ENCODE measurements at regions of chr19 and their contacts with region 1.

Region 1: DNA sequence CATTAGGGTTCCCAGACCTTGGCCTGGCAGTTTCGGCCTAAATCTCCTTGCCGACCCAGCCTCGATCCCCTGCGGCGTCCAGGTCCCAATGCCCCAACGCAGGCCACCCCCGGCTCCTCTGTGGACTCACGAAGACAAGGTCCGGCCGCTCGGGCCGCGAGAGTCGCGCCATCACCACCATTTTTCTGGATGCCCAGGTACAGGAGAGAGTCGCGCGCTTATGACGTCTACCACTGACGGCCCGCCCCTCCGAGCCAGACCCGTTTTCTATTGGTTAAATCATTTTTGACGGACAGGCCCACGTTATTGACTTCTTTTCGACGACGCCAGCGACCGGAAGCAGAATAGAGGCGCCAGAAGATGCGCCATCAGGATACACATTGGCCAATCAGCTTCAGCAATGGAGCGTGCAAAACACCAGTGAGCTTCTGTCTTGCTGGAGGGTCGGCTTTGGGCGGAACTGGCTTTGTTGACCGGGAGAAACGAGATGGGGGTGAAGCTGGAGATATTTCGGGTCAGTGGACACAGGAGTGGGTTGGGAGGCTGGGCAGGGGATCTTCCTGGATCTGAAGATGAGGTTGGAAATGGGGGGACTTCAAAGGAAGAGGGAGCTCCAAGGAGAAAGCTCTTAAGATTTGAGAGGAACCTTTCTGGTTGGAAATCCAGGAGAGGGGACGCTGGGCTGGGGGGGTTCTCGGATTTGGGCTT is at the starts of genes PET100 and XAB2:
- DNase-seq: peak; percentile 89 to 98 (median 94)
- H3K4me3 ChIP-seq: peak within 1 kb of the TSS; percentile 92
- H3K4me3 Mint-ChIP-seq: peak within 1 kb of the TSS; percentile 90 to 99 (median 97)
- H3K27ac ChIP-seq: peak within 1 kb of the TSS; percentile 98
- H3K27ac Mint-ChIP-seq: peak within 1 kb of the TSS; percentile 90 to 100 (median 100)
- H3K4me1 ChIP-seq: peaks cover 22% of the 10 kb centered on the region
- H3K4me1 Mint-ChIP-seq: peaks cover 32 to 51% (median 39%) of the 10 kb centered on the region in 3 donors
- H3K27me3 ChIP-seq: no peaks in the 10 kb centered on the region
- H3K27me3 Mint-ChIP-seq: no peaks in the 10 kb centered on the region
- total RNA-seq, gene PET100: 110 TPM
- total RNA-seq, gene XAB2: 46.0 to 47.6 TPM

Region 2: DNA sequence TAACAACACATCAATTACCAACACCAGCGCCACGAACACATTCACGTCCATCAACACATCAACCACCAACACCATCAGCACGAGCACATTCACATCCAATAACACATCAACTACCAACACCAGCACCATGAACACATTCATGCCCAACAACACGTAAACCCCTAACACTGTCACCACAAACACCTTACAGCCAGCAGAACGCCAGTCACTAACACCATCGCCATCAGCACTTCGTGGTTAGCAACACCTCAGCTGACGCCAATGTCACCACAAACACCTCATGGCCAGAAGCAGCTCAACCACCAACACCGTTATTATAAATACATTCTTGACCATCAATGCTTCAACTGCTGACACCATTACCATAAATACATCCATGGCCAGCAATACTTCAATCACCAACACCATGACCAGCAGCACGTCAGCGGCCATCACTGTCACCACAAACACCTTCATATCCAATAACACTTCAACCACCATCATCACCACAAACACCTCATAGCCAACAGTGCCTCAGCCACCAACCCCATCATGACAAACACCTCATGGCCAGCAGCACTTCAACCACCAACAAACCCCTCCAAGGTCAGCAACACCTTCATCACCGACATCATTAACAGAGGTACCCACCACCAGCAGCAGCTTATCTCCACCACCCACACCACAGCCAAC is 63.1 kb after region 1 on chr19:
- CTCF ChIA-PET with region 1: no interaction called
- POLR2A ChIA-PET with region 1: no interaction called
- DNase-seq: peak in 4 of 5 donors; percentile 28 to 75 (median 60)
- H3K4me3 ChIP-seq: no peak overlapping the region
- H3K4me3 Mint-ChIP-seq: no peak overlapping the region
- H3K27ac ChIP-seq: no peak overlapping the region
- H3K27ac Mint-ChIP-seq: no peak overlapping the region
- H3K4me1 ChIP-seq: peaks cover 11% of the 10 kb centered on the region
- H3K4me1 Mint-ChIP-seq: peaks cover 0 to 6% (median 0%) of the 10 kb centered on the region in 3 donors
- H3K27me3 ChIP-seq: no peaks in the 10 kb centered on the region
- H3K27me3 Mint-ChIP-seq: peaks cover 8 to 10% of the 10 kb centered on the region in 2 donors

Region 3: GRCh38 chr19:7848779-7849457 is 219.4 kb after region 1 on chr19:
- CTCF ChIA-PET with region 1: no interaction called
- POLR2A ChIA-PET with region 1: no interaction called
- DNase-seq: no peak
- H3K4me3 ChIP-seq: no peak overlapping the region
- H3K4me3 Mint-ChIP-seq: no peak overlapping the region
- H3K27ac ChIP-seq: no peak overlapping the region
- H3K27ac Mint-ChIP-seq: no peak overlapping the region
- H3K4me1 ChIP-seq: peaks cover 9% of the 10 kb centered on the region
- H3K4me1 Mint-ChIP-seq: peaks cover 0 to 7% (median 0%) of the 10 kb centered on the region in 3 donors
- H3K27me3 ChIP-seq: no peaks in the 10 kb centered on the region
- H3K27me3 Mint-ChIP-seq: no peaks in the 10 kb centered on the region

Region 4: DNA sequence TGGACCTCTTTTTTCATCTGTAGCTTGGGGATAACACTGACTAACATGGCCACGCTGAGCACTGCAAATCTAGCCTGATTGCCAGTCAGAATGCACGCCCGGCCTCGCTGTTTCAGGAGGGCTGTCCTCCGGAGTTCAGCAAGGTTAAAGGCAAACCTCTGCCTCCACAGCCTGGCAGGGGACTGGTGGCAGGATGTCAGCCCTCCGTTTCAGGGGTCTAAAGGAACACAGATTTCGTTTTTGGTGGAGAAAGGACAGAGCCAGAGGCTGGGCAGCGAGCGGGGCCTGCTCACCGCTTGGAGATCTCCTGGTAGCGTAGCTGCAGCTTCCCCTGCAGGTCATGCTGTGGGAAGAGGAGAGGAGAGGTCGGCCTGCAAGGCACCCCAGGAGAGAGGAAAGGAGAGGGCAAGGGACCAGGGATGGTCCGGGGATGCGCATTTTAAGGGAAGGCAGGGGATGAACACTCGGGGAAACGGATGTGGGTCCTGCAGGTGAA is 691.1 kb after region 1 on chr19:
- CTCF ChIA-PET with region 1: no interaction called
- POLR2A ChIA-PET with region 1: interaction called, 10 read pairs
- DNase-seq: no peak
- H3K4me3 ChIP-seq: peak overlapping the region; percentile 98
- H3K4me3 Mint-ChIP-seq: peak overlapping the region; percentile 94 to 98 (median 96)
- H3K27ac ChIP-seq: peak overlapping the region; percentile 95
- H3K27ac Mint-ChIP-seq: peak overlapping the region; percentile 97 to 100 (median 99)
- H3K4me1 ChIP-seq: peaks cover 33% of the 10 kb centered on the region
- H3K4me1 Mint-ChIP-seq: peaks cover 22 to 52% (median 33%) of the 10 kb centered on the region in 3 donors
- H3K27me3 ChIP-seq: no peaks in the 10 kb centered on the region
- H3K27me3 Mint-ChIP-seq: no peaks in the 10 kb centered on the region